ENCODE measurements at regions of chr22 and their contacts with region 1.

Region 1: DNA sequence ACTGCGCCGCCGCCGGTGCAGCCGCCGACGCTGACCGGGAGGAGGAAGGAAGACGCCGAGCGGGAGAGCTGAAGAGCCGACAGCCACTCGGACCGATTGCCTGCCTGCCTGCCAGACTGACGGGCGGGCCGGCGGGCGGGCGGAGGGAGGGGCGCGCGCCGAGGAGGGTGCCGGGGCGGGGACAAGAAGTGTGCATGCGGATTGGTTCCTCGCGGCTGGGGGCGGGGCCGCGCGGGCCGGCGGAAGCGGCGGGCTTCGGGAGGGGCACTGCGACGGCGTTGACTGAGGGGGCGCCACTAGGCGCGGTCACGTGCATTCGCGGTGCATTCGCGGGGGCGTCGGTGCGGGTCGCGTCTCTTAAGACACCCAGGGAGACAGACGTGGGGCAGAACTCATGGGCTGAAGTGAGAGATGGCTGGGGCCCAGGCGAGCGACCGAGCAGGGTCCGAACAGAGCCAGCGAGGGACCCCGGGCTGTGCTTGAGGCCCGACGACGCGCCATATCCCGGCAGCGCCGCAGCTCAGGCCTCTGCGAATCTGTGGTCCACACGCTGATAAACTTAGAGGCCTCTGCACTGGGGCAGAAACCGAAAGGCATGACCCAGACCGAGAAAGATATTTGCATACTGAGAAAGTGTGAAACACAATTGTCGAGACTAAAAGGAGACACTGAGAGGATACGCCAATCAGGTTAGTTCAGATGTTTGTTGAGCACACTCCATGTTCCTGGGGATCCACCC is at the start of gene MAPK1:
- DNase-seq: peak; percentile 100
- ATAC-seq: peak; percentile 92
- H3K4me3 ChIP-seq: peak within 1 kb of the TSS; percentile 55
- H3K27ac ChIP-seq: peak within 1 kb of the TSS; percentile 81
- H3K4me1 ChIP-seq: peaks cover 52 to 57% of the 10 kb centered on the region in 2 experiments
- H3K27me3 ChIP-seq: no peaks in the 10 kb centered on the region
- CTCF ChIP-seq: no peak
- EP300 ChIP-seq: no peak
- POLR2A ChIP-seq: no peak
- RAD21 ChIP-seq: no peak
- polyA plus RNA-seq, gene MAPK1: 46.3 to 51.4 TPM

Region 2: DNA sequence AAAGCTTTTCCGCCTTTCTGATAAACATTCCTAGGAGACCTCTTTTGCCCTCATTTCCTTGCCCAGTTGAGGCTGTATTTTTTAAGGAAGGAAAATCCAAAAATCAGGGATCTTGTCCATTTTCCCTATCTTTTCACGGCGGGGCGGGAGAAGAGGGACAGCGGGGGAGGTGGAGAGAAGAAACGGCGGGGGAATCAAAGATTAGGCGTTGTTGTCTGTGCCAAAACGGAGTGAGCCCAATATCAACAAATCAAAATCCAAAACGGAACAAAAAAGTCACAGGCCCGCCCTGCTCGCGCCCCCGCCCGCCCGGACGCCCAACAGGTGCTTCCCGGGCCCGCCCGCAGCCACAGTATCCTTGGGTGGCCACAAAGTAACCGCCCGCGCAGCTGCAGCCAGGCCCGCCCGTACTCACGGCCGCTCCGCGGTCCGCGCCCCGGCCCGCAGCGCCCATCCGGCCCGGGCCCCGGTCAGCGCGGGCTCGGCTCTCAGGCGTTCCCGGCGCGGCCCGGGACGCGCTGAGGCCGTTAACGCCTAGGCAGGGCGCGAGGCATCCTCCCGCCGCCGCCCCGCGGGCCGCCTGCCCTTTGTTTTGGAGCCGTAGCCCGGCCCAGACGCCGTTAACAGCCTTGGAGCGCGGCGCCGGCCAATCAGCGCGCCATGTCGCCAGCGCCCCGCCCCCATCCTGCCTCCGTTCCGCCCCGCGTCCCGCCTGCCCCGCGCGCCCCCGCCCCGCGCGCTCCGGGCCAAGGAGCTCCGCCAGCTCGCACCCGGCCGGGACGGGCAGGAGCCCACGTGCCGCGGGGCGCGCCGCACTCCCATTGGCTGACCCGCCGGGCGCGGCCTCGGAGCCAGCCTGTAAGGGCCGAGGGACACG is 132.3 kb before region 1 on chr22 and contains the start of gene YPEL1:
- CTCF ChIA-PET with region 1: no interaction called
- POLR2A ChIA-PET with region 1: interaction called, 14 read pairs
- in situ Hi-C with region 1: no loop called
- intact Hi-C with region 1: loop called (anchors 2 kb)
- DNase-seq: peak; percentile 100
- ATAC-seq: peak; percentile 96
- H3K4me3 ChIP-seq: peak within 1 kb of the TSS; percentile 52
- H3K27ac ChIP-seq: peak within 1 kb of the TSS; percentile 42
- H3K4me1 ChIP-seq: peaks cover 17 to 29% of the 10 kb centered on the region in 2 experiments
- H3K27me3 ChIP-seq: peaks cover 52 to 57% of the 10 kb centered on the region in 2 experiments
- CTCF ChIP-seq: peak in 1 of 3 experiments; percentile 1; a peak in 2 of 6 replicates
- EP300 ChIP-seq: peak; percentile 43
- POLR2A ChIP-seq: no peak
- RAD21 ChIP-seq: peak in 1 of 2 experiments; percentile 59; a peak in 2 of 4 replicates
- polyA plus RNA-seq, gene YPEL1: 0.07 to 0.10 TPM

Region 3: DNA sequence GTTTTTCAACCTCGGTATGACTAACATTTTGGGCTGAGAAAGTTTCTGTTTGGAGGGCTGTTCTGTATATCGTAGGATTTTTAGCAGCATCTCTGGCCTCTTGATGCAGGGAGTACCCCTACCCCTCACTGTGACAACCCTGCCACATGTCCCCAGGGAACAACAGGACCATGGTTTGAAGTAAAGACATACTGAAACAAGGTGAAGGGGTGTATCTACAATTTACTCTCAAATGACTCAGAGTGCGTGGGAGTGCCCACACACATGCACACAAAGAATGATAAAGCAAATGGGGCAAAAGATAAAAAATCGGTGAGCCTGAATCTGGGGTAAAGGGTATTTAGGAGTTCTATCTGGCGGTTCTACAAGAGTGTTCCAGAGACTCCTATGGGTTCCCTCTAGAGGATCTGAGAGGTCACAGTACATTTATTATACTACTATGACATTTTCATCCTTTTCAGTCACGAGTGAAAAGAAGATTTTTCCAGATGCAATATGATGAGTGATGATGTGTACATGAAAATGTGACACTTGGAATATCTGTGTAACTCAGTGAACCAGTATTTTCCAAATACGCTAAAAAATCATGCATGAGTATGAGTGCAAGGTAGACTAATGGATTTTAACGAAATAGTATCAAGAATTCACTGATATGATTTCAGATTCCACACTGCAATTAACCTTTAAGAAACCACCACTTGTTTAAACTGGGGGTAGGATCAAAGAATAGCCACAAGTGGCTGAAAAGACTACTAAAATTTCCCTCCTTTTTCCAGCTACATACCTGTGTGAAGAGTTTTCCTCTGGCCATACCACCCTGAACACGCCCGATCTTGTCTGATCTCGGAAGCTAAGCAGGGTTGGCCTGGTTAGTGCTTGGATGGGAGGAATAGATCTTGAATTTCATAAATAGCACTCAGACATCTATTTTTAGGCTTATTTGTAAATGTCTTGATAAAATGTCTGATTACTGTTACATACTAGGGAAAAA is 75.8 kb before region 1 on chr22:
- CTCF ChIA-PET with region 1: no interaction called
- POLR2A ChIA-PET with region 1: no interaction called
- in situ Hi-C with region 1: no loop called
- intact Hi-C with region 1: loop called (anchors 2 kb)
- DNase-seq: peak; percentile 90 to 99 (median 95)
- ATAC-seq: peak; percentile 86
- H3K4me3 ChIP-seq: no peak overlapping the region
- H3K27ac ChIP-seq: peak overlapping the region; percentile 10; the same call in 2 of the 3 replicates
- H3K4me1 ChIP-seq: peaks cover 0 to 11% of the 10 kb centered on the region in 2 experiments; a peak in 3 of 5 replicates
- H3K27me3 ChIP-seq: no peaks in the 10 kb centered on the region
- CTCF ChIP-seq: peak in 1 of 3 experiments; percentile 83; a peak in 2 of 6 replicates
- EP300 ChIP-seq: peak; percentile 99
- POLR2A ChIP-seq: no peak
- RAD21 ChIP-seq: no peak

Region 4: DNA sequence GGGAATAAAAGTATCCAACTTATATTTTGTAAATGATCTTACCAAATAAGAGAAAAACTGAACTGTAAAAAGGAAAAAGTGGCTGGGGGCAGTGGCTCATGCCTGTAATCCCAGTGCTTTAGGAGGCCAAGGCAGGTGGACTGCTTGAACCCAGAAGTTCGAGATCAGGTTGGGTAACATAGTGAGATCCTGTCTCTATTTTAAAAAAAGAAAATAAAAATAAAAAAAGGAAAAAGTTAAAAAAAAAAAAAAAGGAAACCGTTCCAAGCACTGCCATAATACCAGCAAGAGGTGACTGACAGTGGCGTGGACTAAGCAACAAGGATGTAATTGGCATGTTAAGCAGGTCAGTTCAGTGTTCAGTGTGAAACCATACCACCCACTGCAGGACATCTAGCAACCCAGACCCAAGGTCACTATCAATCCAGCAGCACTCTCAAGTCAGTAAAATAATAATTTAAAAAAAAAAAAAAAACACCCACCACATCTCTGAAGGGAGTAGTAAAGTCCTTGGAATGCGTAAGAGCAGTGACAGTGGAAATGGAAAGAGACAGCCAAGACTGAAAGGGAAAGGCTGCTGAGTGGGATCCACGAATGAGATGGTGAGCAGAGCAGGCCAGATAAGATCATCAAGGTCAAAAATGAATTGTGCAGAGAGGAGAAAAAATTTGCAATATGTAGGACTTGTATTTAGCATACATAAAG is 43.8 kb before region 1 on chr22:
- CTCF ChIA-PET with region 1: no interaction called
- POLR2A ChIA-PET with region 1: interaction called, 1,351 read pairs
- in situ Hi-C with region 1: no loop called
- intact Hi-C with region 1: loop called (anchors 2 kb)
- DNase-seq: peak; percentile 64 to 75 (median 68)
- ATAC-seq: peak; percentile 25
- H3K4me3 ChIP-seq: no peak overlapping the region
- H3K27ac ChIP-seq: peak overlapping the region; percentile 0; the same call in 1 of the 3 replicates
- H3K4me1 ChIP-seq: peaks cover 43 to 60% of the 10 kb centered on the region in 2 experiments
- H3K27me3 ChIP-seq: no peaks in the 10 kb centered on the region
- CTCF ChIP-seq: no peak
- EP300 ChIP-seq: no peak
- POLR2A ChIP-seq: no peak
- RAD21 ChIP-seq: no peak

Region 5: GRCh38 chr22:22558972-22559603 is 691.4 kb after region 1 on chr22 and contains the start of gene PRAME:
- CTCF ChIA-PET with region 1: no interaction called
- POLR2A ChIA-PET with region 1: interaction called, 6 read pairs
- in situ Hi-C with region 1: no loop called
- intact Hi-C with region 1: loop called (anchors 10 kb)
- DNase-seq: peak; percentile 100
- ATAC-seq: peak; percentile 92
- H3K4me3 ChIP-seq: peak within 1 kb of the TSS; percentile 54
- H3K27ac ChIP-seq: peak within 1 kb of the TSS; percentile 78
- H3K4me1 ChIP-seq: peaks cover 39 to 43% of the 10 kb centered on the region in 2 experiments
- H3K27me3 ChIP-seq: no peaks in the 10 kb centered on the region; a peak in 1 of 5 replicates
- CTCF ChIP-seq: no peak
- EP300 ChIP-seq: no peak
- POLR2A ChIP-seq: no peak
- RAD21 ChIP-seq: no peak
- polyA plus RNA-seq, gene PRAME: 662 to 1,142 TPM